CD8-positive, alpha-beta T cell (primary cell): ENCODE measurements at regions of chr5 and their contacts with region 1.

Region 1: DNA sequence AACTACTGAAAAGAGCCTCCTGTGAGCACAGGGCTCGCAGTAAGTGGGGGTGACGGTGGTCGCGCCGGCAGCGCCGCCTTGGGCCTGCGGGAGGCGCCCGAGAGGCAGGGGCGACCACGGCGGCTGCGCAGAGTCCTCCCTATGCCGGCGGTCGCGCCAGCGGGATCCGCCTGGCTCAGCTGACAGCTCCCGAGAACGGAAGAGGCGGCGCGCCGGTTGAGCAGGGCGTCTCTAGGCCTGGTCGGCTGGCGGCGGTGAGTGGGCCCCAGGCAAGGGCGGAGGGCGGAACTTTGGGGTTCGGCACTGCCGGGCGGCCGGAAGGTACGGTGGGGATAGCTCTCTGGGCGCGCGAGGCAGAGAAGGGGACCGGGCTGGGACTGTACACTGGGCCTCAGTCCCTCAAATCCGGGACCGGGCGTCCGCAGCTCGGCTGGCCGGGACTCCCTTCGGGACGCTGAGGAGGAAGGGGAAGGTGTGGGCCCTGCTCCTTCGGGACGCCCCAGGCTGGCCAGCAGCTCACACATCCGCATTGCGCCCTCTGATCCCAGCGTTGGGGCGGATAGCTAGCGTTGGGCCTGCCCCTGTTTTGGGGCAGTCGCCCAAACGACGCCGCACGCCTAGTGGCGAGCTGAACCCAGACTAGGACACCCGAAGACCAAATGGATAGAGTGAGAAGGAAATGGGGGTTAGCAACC is at the start of gene RNF14:
- DNase-seq: peak; percentile 86 to 97 (median 92)
- ATAC-seq: peak; percentile 94
- H3K4me3 ChIP-seq: peak within 1 kb of the TSS; percentile 77 to 94
- H3K4me3 Mint-ChIP-seq: peak within 1 kb of the TSS; percentile 98
- H3K27ac ChIP-seq: peak within 1 kb of the TSS; percentile 80 to 97
- H3K27ac Mint-ChIP-seq: peak within 1 kb of the TSS; percentile 99
- H3K4me1 ChIP-seq: peaks cover 18% of the 10 kb centered on the region
- H3K4me1 Mint-ChIP-seq: peaks cover 27% of the 10 kb centered on the region
- H3K27me3 ChIP-seq: no peaks in the 10 kb centered on the region
- H3K27me3 Mint-ChIP-seq: no peaks in the 10 kb centered on the region
- CTCF ChIP-seq: peak; percentile 98
- total RNA-seq, gene RNF14: 11.3 to 12.8 TPM

Region 2: GRCh38 chr5:141849375-141850243 is 119.5 kb before region 1 on chr5:
- CTCF ChIA-PET with region 1: interaction called, 3 read pairs
- POLR2A ChIA-PET with region 1: interaction called, 5 read pairs
- intact Hi-C with region 1: loop called in 1 of 2 experiments (anchors 1 kb)
- DNase-seq: peak; percentile 42 to 83 (median 70)
- ATAC-seq: peak; percentile 79
- H3K4me3 ChIP-seq: peak overlapping the region; percentile 77 to 84
- H3K4me3 Mint-ChIP-seq: peak overlapping the region; percentile 87
- H3K27ac ChIP-seq: peak overlapping the region; percentile 73
- H3K27ac Mint-ChIP-seq: peak overlapping the region; percentile 82
- H3K4me1 ChIP-seq: peaks cover 7% of the 10 kb centered on the region
- H3K4me1 Mint-ChIP-seq: peaks cover 10% of the 10 kb centered on the region
- H3K27me3 ChIP-seq: no peaks in the 10 kb centered on the region
- H3K27me3 Mint-ChIP-seq: peaks cover 2% of the 10 kb centered on the region
- CTCF ChIP-seq: no peak

Region 3: GRCh38 chr5:143456952-143457547 is 1488.0 kb after region 1 on chr5:
- CTCF ChIA-PET with region 1: no interaction called
- POLR2A ChIA-PET with region 1: no interaction called
- intact Hi-C with region 1: no loop called
- DNase-seq: no peak
- ATAC-seq: no peak
- H3K4me3 ChIP-seq: no peak overlapping the region
- H3K4me3 Mint-ChIP-seq: no peak overlapping the region
- H3K27ac ChIP-seq: no peak overlapping the region
- H3K27ac Mint-ChIP-seq: no peak overlapping the region
- H3K4me1 ChIP-seq: no peaks in the 10 kb centered on the region
- H3K4me1 Mint-ChIP-seq: no peaks in the 10 kb centered on the region
- H3K27me3 ChIP-seq: no peaks in the 10 kb centered on the region
- H3K27me3 Mint-ChIP-seq: no peaks in the 10 kb centered on the region
- CTCF ChIP-seq: no peak